Activated T-helper 1 cell treated with anti-CD3 and anti-CD28 coated beads, Interleukin-12 subunit alpha, Interleukin-12 subunit beta, Interleukin-2, Interleukin-4 antibody, amounts not matched to agents 30 ng/mL and 10 ng/mL and 1 ng/mL, durations not matched to agents 14 hours and 24 hours and 36 hours (primary cell): ENCODE measurements at regions of chr19 and their contacts with region 1.

Region 1: GRCh38 chr19:36915992-36916830 is at the starts of genes ZNF568 and ZNF829:
- DNase-seq: peak; percentile 92
- H3K4me3 Mint-ChIP-seq: peak within 1 kb of the TSS; percentile 92
- H3K27ac Mint-ChIP-seq: peak within 1 kb of the TSS; percentile 95
- H3K4me1 Mint-ChIP-seq: peaks cover 21% of the 10 kb centered on the region
- H3K27me3 Mint-ChIP-seq: no peaks in the 10 kb centered on the region
- total RNA-seq, gene ZNF568: 4.4 and 4.9 TPM in 2 replicates
- total RNA-seq, gene ZNF829: 5.3 and 5.4 TPM in 2 replicates

Region 2: GRCh38 chr19:36528194-36528920 is 387.9 kb before region 1 on chr19 and contains the start of gene ZNF260:
- intact Hi-C with region 1: loop called (anchors 1 kb)
- DNase-seq: peak; percentile 89
- H3K4me3 Mint-ChIP-seq: peak within 1 kb of the TSS; percentile 95
- H3K27ac Mint-ChIP-seq: peak within 1 kb of the TSS; percentile 93
- H3K4me1 Mint-ChIP-seq: peaks cover 22% of the 10 kb centered on the region
- H3K27me3 Mint-ChIP-seq: peaks cover 1% of the 10 kb centered on the region
- total RNA-seq, gene ZNF260: 7.5 and 8.9 TPM in 2 replicates

Region 3: DNA sequence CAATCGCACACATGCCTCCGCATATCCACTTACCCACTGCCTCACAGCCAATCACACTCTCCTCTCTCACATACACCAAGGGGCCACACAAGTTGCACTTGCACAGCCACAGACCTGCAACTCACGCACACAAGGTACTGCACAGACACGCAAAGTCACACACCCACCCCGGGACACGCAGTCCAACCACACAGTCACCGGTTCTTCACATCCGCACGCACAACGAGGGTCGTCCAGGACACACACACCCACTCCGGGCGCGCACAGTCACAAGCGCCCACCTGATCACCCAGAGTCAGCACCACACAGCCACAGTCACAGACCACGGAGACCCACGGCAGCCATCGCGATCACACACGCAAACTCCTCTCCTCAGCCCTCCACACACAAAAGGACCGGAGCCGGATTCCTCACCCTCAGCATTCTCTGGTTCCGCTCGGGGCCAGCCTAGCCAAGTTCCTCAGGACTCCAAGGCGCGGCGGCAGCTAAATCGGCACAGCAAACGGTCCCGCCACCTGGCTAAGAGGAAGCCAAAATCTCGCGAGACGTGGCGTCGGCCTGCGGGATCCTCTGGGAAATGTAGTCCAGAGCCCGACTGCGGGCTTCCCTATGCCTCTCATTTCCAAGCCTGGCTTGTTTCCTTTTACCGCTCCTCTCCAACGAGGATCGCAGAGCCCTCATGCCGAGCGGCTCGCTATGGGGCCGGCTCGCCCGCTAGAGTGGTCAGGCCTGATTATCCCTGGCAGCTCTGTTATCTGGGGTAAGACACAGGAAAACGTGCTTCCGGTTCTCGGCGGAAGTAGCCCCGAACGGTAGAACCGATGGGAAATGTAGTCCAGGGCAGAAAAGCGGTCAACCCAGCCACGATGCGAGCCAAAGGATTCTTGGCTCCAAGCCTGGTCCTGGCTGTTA is 143.6 kb before region 1 on chr19 and contains the start of gene ZNF850:
- intact Hi-C with region 1: loop called (anchors 1 kb)
- DNase-seq: peak; percentile 88
- H3K4me3 Mint-ChIP-seq: peak within 1 kb of the TSS; percentile 98
- H3K27ac Mint-ChIP-seq: peak within 1 kb of the TSS; percentile 93
- H3K4me1 Mint-ChIP-seq: peaks cover 18% of the 10 kb centered on the region
- H3K27me3 Mint-ChIP-seq: no peaks in the 10 kb centered on the region
- total RNA-seq, gene ZNF850: 3.2 and 3.7 TPM in 2 replicates

Region 4: GRCh38 chr19:37077934-37078725 is 161.9 kb after region 1 on chr19 and contains the start of gene ZNF420:
- intact Hi-C with region 1: loop called (anchors 1 kb)
- DNase-seq: peak; percentile 85
- H3K4me3 Mint-ChIP-seq: peak within 1 kb of the TSS; percentile 93
- H3K27ac Mint-ChIP-seq: peak within 1 kb of the TSS; percentile 90
- H3K4me1 Mint-ChIP-seq: peaks cover 21% of the 10 kb centered on the region
- H3K27me3 Mint-ChIP-seq: no peaks in the 10 kb centered on the region
- total RNA-seq, gene ZNF420: 5.9 and 9.1 TPM in 2 replicates

Region 5: GRCh38 chr19:37466798-37467607 is 550.8 kb after region 1 on chr19 and contains the start of gene ZNF569:
- intact Hi-C with region 1: loop called (anchors 2 kb)
- DNase-seq: peak; percentile 85
- H3K4me3 Mint-ChIP-seq: peak within 1 kb of the TSS; percentile 92
- H3K27ac Mint-ChIP-seq: peak within 1 kb of the TSS; percentile 93
- H3K4me1 Mint-ChIP-seq: peaks cover 27% of the 10 kb centered on the region
- H3K27me3 Mint-ChIP-seq: no peaks in the 10 kb centered on the region
- total RNA-seq, gene ZNF569: 2.7 and 3.7 TPM in 2 replicates